ENCODE measurements at regions of chr7 and their contacts with region 1.

Region 1: DNA sequence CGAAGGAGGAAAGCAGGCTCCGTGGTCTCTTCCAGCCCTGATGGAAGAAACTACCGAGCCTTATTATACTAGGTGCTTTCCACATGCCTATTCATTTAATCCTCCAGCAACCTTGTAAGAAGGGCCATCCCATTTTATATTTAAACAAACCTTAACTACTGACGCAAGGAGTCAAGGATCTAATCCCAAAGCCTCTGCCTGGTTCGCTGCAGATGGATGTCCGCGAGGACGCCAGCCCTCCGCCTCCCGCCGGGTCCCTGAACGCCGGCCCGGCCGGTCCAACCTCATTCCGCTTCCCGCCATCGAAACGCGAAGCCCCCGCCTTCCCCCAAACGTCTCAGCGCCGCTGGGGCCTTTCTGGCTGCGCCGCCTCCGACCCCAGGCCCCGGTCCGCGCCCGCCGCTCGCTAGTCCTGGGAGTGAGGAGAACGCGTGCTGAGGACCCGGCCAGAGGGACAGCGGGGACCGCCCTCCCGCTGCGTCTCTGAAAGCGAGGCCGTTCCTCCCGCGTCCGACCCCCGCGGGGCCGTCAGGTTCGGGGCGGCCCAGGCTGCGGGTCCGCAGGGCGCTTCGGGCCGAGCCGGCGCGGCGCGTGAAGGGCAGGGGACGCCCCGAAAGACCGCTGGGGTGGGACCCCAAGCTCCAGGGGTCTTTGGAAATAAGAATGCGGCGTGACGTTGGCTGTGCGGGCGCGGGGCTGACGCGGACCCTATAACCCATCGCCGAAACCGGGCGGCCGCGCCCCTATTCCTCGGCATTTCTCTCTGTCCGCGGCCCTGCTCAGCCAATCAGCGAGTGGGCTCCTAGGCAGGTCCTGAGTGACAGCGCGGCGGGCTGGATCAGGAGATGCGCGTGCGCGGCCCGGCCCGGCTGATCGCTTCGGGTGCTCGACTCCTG is at the start of gene ATP6V0E2:
- DNase-seq: peak; percentile 97
- ATAC-seq: peak; percentile 86
- H3K4me3 Mint-ChIP-seq: peak within 1 kb of the TSS; percentile 88
- H3K27ac Mint-ChIP-seq: peak within 1 kb of the TSS; percentile 91
- H3K4me1 Mint-ChIP-seq: peaks cover 74% of the 10 kb centered on the region
- H3K27me3 Mint-ChIP-seq: no peaks in the 10 kb centered on the region
- CTCF ChIP-seq: no peak
- total RNA-seq, gene ATP6V0E2: 46.3 to 46.7 TPM

Region 2: GRCh38 chr7:149838224-149838947 is 34.9 kb before region 1 on chr7 and contains the start of gene ZNF862:
- CTCF ChIA-PET with region 1: interaction called, 18 read pairs
- POLR2A ChIA-PET with region 1: interaction called, 13 read pairs
- intact Hi-C with region 1: loop called (anchors 2 kb)
- DNase-seq: peak; percentile 98
- ATAC-seq: peak; percentile 98
- H3K4me3 Mint-ChIP-seq: peak within 1 kb of the TSS; percentile 79
- H3K27ac Mint-ChIP-seq: peak within 1 kb of the TSS; percentile 71
- H3K4me1 Mint-ChIP-seq: peaks cover 32% of the 10 kb centered on the region
- H3K27me3 Mint-ChIP-seq: no peaks in the 10 kb centered on the region
- CTCF ChIP-seq: no peak
- total RNA-seq, gene ZNF862: 11.0 to 12.4 TPM

Region 3: DNA sequence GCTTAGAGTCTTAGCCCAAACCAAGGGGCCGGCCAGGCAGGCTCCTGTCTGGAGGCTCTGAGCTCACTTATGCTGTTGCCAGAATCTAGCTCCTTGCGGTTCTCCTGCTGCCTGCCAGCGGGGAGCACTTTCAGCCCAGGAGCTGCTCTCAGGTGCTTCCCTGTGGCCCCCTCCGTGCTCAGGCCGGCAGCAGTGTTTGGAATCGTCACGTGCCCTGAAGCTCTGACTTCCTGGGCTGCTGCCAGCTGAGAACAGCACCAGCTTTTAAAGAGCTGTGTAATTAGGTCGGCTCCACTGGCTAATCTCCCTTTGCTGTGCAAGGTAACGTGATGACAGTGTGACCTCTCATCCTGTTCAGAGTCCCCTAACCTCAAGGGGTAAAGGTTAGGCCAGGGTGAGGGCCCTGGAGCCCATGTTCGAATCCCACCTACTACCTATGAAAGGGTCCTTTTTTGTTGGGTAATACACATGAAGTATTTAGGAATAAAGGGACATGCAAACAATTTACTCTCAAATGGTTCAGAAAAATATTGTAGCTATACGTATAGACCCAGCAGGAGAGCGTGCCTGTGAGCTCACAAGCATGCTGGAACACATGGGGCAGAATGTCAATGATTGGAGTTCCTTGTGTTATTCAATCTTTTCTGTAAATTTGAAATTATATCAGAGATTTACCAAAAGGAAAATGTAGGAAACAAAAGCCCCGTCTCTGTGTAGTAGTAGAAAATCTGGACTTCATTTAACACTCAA is 18.5 kb before region 1 on chr7:
- CTCF ChIA-PET with region 1: interaction called, 28 read pairs
- POLR2A ChIA-PET with region 1: interaction called, 3 read pairs
- intact Hi-C with region 1: loop called (anchors 1 kb)
- DNase-seq: peak; percentile 36
- ATAC-seq: peak; percentile 43
- H3K4me3 Mint-ChIP-seq: no peak overlapping the region
- H3K27ac Mint-ChIP-seq: no peak overlapping the region
- H3K4me1 Mint-ChIP-seq: peaks cover 47% of the 10 kb centered on the region
- H3K27me3 Mint-ChIP-seq: no peaks in the 10 kb centered on the region
- CTCF ChIP-seq: no peak

Region 4: DNA sequence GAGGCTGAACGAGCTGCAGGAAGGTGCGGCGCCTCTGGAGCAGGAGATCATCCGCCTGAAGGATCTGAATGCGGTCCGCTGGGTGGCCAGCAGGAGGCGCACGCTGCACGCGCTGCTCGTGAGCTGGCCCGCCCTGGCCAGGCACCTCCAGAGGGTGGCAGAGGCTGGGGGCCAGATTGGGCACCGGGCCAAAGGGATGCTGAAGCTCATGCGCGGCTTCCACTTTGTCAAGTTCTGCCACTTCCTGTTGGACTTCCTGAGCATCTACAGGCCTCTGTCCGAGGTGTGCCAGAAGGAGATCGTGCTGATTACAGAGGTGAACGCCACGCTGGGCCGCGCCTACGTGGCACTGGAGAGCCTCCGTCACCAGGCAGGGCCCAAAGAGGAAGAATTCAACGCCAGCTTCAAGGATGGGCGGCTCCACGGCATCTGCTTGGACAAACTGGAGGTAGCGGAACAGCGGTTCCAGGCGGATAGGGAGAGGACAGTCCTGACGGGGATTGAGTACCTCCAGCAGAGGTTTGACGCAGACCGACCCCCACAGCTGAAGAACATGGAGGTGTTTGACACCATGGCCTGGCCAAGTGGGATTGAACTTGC is 11.8 kb before region 1 on chr7:
- CTCF ChIA-PET with region 1: interaction called, 28 read pairs
- POLR2A ChIA-PET with region 1: interaction called, 4 read pairs
- intact Hi-C with region 1: no loop called
- DNase-seq: peak; percentile 39
- ATAC-seq: no peak
- H3K4me3 Mint-ChIP-seq: no peak overlapping the region
- H3K27ac Mint-ChIP-seq: no peak overlapping the region
- H3K4me1 Mint-ChIP-seq: peaks cover 51% of the 10 kb centered on the region
- H3K27me3 Mint-ChIP-seq: no peaks in the 10 kb centered on the region
- CTCF ChIP-seq: peak; percentile 47

Region 5: GRCh38 chr7:149883452-149883861 is 10.1 kb after region 1 on chr7:
- CTCF ChIA-PET with region 1: interaction called, 13 read pairs
- POLR2A ChIA-PET with region 1: interaction called, 11 read pairs
- intact Hi-C with region 1: no loop called
- DNase-seq: peak; percentile 85
- ATAC-seq: peak; percentile 94
- H3K4me3 Mint-ChIP-seq: no peak overlapping the region
- H3K27ac Mint-ChIP-seq: peak overlapping the region; percentile 52
- H3K4me1 Mint-ChIP-seq: peaks cover 4% of the 10 kb centered on the region
- H3K27me3 Mint-ChIP-seq: no peaks in the 10 kb centered on the region
- CTCF ChIP-seq: peak; percentile 58